A673 (cell line): ENCODE measurements at regions of chr3 and their contacts with region 1.

Region 1: GRCh38 chr3:138935848-138936740 is 10.8 kb downstream of the FOXL2 start:
- DNase-seq: peak; percentile 61
- H3K4me3 ChIP-seq: peak overlapping the region; percentile 45
- H3K27ac ChIP-seq: no peak overlapping the region
- H3K4me1 ChIP-seq: peaks cover 5% of the 10 kb centered on the region
- H3K27me3 ChIP-seq: peaks cover 59% of the 10 kb centered on the region
- CTCF ChIP-seq: peak; percentile 88

Region 2: GRCh38 chr3:138442433-138442832 is 493.7 kb before region 1 on chr3:
- CTCF ChIA-PET with region 1: no interaction called
- POLR2A ChIA-PET with region 1: interaction called, 11 read pairs
- intact Hi-C with region 1: no loop called
- DNase-seq: peak; percentile 52
- H3K4me3 ChIP-seq: no peak overlapping the region
- H3K27ac ChIP-seq: no peak overlapping the region
- H3K4me1 ChIP-seq: no peaks in the 10 kb centered on the region
- H3K27me3 ChIP-seq: no peaks in the 10 kb centered on the region
- CTCF ChIP-seq: no peak

Region 3: GRCh38 chr3:138923531-138923994 is 12.5 kb before region 1 on chr3:
- CTCF ChIA-PET with region 1: interaction called, 13 read pairs
- POLR2A ChIA-PET with region 1: no interaction called
- intact Hi-C with region 1: no loop called
- DNase-seq: peak; percentile 91
- H3K4me3 ChIP-seq: no peak overlapping the region
- H3K27ac ChIP-seq: no peak overlapping the region
- H3K4me1 ChIP-seq: no peaks in the 10 kb centered on the region
- H3K27me3 ChIP-seq: no peaks in the 10 kb centered on the region
- CTCF ChIP-seq: peak; percentile 92

Region 4: GRCh38 chr3:138974462-138974861 is 38.4 kb after region 1 on chr3:
- CTCF ChIA-PET with region 1: interaction called, 10 read pairs
- POLR2A ChIA-PET with region 1: no interaction called
- intact Hi-C with region 1: no loop called
- DNase-seq: no peak
- H3K4me3 ChIP-seq: no peak overlapping the region
- H3K27ac ChIP-seq: no peak overlapping the region
- H3K4me1 ChIP-seq: no peaks in the 10 kb centered on the region
- H3K27me3 ChIP-seq: no peaks in the 10 kb centered on the region
- CTCF ChIP-seq: no peak

Region 5: DNA sequence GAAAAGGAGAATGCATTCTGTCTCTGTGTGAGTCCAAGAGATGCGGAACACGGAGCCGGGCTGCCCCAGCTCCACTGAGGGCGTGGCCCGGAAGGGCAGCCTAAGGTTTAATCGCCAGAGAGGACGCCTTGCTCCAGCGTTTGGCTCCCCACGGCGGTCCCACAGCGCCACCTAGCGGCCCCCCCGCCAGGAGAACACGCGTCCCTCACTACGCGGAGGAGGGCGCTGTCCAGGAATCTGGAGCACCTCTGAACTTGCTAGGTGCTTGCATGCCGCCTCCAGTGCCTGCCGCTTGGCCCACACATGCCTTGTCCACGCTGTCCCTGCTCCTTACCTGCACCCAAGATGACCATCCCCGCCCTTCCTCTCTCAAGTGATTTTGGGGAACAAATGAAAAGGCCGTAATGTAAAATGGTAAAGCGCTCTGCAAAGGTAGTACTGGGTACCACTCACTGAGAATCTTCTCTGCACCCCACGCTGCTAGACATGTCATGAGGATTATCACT is 393.3 kb after region 1 on chr3:
- CTCF ChIA-PET with region 1: interaction called, 4 read pairs
- POLR2A ChIA-PET with region 1: no interaction called
- intact Hi-C with region 1: loop called (anchors 1 kb)
- DNase-seq: peak; percentile 85
- H3K4me3 ChIP-seq: no peak overlapping the region
- H3K27ac ChIP-seq: no peak overlapping the region
- H3K4me1 ChIP-seq: no peaks in the 10 kb centered on the region
- H3K27me3 ChIP-seq: peaks cover 28% of the 10 kb centered on the region
- CTCF ChIP-seq: peak; percentile 99

Region 6: GRCh38 chr3:139414608-139415224 is 478.6 kb after region 1 on chr3:
- CTCF ChIA-PET with region 1: no interaction called
- POLR2A ChIA-PET with region 1: no interaction called
- intact Hi-C with region 1: no loop called
- DNase-seq: no peak
- H3K4me3 ChIP-seq: no peak overlapping the region
- H3K27ac ChIP-seq: no peak overlapping the region
- H3K4me1 ChIP-seq: no peaks in the 10 kb centered on the region
- H3K27me3 ChIP-seq: no peaks in the 10 kb centered on the region
- CTCF ChIP-seq: no peak